CD14-positive monocyte (primary cell): ENCODE measurements at regions of chr15 and their contacts with region 1.

Region 1: DNA sequence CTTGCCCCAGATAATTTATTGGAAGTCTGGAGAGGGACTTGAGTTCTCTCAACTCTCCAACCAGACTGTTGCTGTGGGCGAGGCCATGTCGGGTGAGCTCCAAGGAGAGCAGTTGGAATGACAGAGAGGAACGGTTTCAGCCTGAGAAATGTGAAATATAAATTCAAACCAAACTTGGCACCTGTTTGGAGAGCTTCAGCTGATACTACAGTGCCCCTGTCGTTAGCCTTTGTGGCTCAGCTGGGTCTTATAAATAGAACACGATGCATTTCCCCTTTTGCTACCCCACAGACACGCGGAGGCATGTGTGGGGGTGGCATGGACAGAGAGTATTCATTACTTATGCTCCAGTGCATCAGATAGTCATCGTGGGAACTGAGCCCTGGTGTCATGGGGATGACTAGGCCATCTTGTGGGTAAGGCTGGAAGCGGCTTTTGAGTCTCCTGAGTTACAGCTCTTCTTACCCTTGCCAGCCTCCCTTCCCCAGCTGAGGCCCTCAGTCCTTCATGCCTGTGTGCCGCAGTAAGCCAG is 15.6 kb downstream of the SMAD3 start:
- DNase-seq: peak; percentile 95 to 97 (median 96)
- H3K4me3 ChIP-seq: peak overlapping the region in 1 of 3 experiments; percentile 45
- H3K4me3 Mint-ChIP-seq: peak overlapping the region; percentile 56 to 58
- H3K27ac ChIP-seq: peak overlapping the region; percentile 75 to 83
- H3K27ac Mint-ChIP-seq: peak overlapping the region; percentile 88 to 96 (median 95)
- H3K4me1 ChIP-seq: peaks cover 91 to 98% of the 10 kb centered on the region in 2 donors
- H3K4me1 Mint-ChIP-seq: peaks cover 97% of the 10 kb centered on the region
- H3K27me3 ChIP-seq: no peaks in the 10 kb centered on the region
- H3K27me3 Mint-ChIP-seq: peaks cover 0 to under 1% (median 0%) of the 10 kb centered on the region in 3 donors
- CTCF ChIP-seq: peak; percentile 45

Region 2: GRCh38 chr15:67024314-67024997 is 56.5 kb before region 1 on chr15:
- intact Hi-C with region 1: loop called (anchors 5 to 10 kb)
- DNase-seq: peak; percentile 93 to 95 (median 95)
- H3K4me3 ChIP-seq: peak overlapping the region in 2 of 3 experiments; percentile 11 to 54
- H3K4me3 Mint-ChIP-seq: peak overlapping the region; percentile 47 to 70
- H3K27ac ChIP-seq: peak overlapping the region; percentile 84 to 97
- H3K27ac Mint-ChIP-seq: peak overlapping the region; percentile 94 to 99 (median 99)
- H3K4me1 ChIP-seq: peaks cover 74 to 81% of the 10 kb centered on the region in 2 donors
- H3K4me1 Mint-ChIP-seq: peaks cover 77% of the 10 kb centered on the region
- H3K27me3 ChIP-seq: no peaks in the 10 kb centered on the region
- H3K27me3 Mint-ChIP-seq: peaks cover 0 to 2% (median 0%) of the 10 kb centered on the region in 3 donors
- CTCF ChIP-seq: no peak